ENCODE measurements at regions of chr1 and their contacts with region 1.

Region 1: DNA sequence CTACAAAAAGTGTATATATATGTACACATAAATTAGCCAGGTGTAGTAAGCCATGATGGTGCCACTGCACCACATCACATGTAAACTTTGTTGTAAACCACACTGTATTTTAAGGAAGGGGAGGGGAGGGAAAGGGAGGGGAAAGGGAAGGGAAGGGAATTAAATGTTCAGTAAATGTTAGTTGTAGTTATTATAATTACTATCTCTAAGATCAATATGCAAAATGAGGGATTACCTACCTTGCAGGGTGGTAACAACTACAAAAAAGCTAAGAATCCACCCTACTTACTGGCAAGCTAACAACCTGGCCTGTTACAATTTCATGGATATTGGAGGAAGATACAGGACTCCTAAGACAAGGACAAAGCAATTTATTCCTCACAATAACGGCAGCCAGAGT is 17.7 kb downstream of the FAF1 start:
- DNase-seq: no peak
- ATAC-seq: no peak
- H3K4me3 ChIP-seq: no peak overlapping the region
- H3K27ac ChIP-seq: no peak overlapping the region
- H3K4me1 ChIP-seq: no peaks in the 10 kb centered on the region
- H3K27me3 ChIP-seq: no peaks in the 10 kb centered on the region
- CTCF ChIP-seq: no peak
- POLR2A ChIP-seq: no peak
- RAD21 ChIP-seq: no peak

Region 2: GRCh38 chr1:50913954-50914353 is 28.4 kb before region 1 on chr1:
- CTCF ChIA-PET with region 1: interaction called, 10 read pairs
- POLR2A ChIA-PET with region 1: no interaction called
- dilution Hi-C with region 1: no loop called
- in situ Hi-C with region 1: no loop called
- intact Hi-C with region 1: no loop called
- DNase-seq: peak; percentile 3
- ATAC-seq: no peak
- H3K4me3 ChIP-seq: no peak overlapping the region
- H3K27ac ChIP-seq: no peak overlapping the region
- H3K4me1 ChIP-seq: no peaks in the 10 kb centered on the region
- H3K27me3 ChIP-seq: no peaks in the 10 kb centered on the region
- CTCF ChIP-seq: no peak
- POLR2A ChIP-seq: no peak
- RAD21 ChIP-seq: no peak